ENCODE measurements at regions of chr2 and their contacts with region 1.

Region 1: DNA sequence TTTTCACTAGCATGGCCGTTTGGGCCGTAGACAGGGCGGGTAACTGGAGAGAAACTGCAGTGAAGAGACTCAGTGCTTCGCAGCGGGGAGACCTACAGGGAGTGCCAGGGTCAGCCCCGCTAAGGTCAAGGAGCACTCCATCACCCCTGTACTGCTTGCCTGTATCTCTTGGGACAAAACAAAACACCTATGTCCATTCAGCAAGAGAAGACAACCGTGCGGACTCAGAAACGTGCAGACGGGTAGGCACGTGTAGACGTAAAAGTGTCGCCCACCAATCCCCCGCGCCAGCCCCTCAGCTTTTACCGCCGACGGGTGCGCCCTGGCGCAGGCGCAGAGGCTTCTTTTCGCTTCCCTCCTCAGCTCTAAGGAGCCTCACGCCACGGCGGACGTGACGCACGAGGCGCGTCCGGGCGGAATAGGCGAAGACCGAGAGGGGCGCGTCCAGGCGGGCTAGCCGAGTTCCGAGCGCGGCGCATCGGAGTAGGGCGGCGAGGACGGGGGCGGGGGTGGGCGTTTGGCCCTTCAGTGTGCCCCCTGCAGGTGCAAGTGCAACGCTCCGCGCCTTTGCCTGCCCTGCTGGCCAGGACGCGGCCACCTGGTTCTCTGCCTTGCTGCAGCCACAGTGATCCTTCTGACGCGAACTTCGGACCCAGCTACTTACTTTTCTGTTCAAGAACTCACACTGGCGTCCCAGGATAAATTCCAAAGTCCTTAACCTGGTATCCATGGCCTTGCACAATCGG is 3.3 kb upstream of the SOS1 start:
- DNase-seq: peak; percentile 99
- H3K4me3 ChIP-seq: peak overlapping the region; percentile 73
- H3K27ac ChIP-seq: peak overlapping the region; percentile 87
- H3K4me1 ChIP-seq: peaks cover 61% of the 10 kb centered on the region
- CTCF ChIP-seq: peak; percentile 78

Region 2: DNA sequence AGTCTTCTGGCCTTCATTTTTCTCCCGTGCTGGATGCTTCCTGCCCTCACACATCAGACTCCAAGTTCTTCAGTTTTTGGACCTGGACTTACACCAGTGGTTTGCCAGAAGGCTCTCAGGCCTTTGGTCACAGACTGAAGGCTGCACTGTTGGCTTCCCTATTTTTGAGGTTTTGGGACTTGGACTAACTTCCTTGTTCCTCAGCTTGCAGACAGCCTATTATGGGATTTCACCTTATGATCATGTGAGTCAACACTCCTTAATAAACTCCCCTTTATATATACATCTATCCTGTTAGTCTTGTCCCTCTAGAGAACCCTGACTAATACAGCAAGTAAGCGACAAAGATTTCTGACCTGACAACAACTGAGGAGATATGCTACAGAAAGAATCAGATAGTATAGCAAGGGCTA is 1459.9 kb before region 1 on chr2:
- CTCF ChIA-PET with region 1: no interaction called
- POLR2A ChIA-PET with region 1: no interaction called
- intact Hi-C with region 1: loop called (anchors 10 kb)
- DNase-seq: no peak
- H3K4me3 ChIP-seq: no peak overlapping the region
- H3K27ac ChIP-seq: no peak overlapping the region
- H3K4me1 ChIP-seq: peaks cover 32% of the 10 kb centered on the region
- CTCF ChIP-seq: no peak

Region 3: DNA sequence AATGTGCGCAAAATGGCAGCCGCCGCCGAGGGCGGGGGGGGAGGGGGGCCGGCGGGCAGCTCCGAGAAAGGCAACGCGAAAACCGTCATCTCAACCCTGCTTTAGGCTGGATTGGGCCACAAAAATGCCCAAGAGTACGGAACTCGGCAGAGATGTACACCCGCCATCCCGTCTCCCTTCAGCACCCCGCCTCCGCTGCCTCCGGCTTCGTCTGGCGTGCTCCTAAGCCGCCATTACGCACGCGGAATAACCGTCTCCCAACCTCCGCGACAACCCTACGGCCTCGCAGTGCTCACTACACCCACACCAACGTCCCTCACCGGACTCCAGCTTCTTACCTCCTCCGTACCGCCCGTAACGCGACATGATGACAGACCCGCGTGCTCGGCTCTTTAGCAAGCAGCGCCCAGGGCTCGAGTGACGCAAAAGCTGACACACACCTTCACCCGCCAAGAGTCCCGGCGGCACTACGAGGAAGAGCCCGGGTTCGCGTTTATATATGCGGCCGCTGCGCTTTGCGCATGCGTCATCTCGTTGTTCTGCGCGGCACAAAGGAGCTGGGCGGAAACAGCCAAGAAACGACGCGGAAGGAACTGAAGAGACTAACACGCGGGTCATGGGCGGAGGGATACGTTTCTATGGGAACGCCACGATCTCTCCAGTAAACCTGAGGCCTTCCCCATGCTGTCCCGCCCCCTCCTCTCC is 373.1 kb before region 1 on chr2 and contains the start of gene SRSF7:
- CTCF ChIA-PET with region 1: no interaction called
- POLR2A ChIA-PET with region 1: interaction called, 4 read pairs
- intact Hi-C with region 1: loop called (anchors 5 kb)
- DNase-seq: peak; percentile 98
- H3K4me3 ChIP-seq: peak within 1 kb of the TSS; percentile 88
- H3K27ac ChIP-seq: peak within 1 kb of the TSS; percentile 80
- H3K4me1 ChIP-seq: peaks cover 55% of the 10 kb centered on the region
- CTCF ChIP-seq: no peak
- total RNA-seq, gene SRSF7: 316 and 337 TPM in 2 replicates

Region 4: DNA sequence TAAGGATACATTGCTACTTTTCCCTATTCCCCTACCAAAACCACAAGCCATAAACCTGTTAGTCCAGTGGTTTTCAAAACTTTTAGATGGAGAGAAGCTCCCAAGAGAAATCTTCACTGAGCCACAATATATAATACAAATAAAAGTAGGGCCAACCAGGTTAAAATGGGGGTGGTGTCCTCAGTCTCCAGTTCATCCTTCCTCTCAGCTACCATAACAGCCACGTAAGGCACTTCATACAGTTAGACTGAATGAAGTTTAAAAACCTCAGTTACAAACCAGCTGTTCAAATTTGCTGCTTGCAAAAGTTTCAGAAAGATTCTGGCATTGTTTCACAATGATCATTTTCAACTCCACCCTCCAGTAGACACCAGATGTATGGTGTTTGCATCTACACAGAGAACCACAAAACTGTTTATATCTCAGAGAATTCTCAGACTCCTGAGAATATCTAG is 29.3 kb before region 1 on chr2:
- CTCF ChIA-PET with region 1: no interaction called
- POLR2A ChIA-PET with region 1: interaction called, 19 read pairs
- intact Hi-C with region 1: no loop called
- DNase-seq: no peak
- H3K4me3 ChIP-seq: no peak overlapping the region
- H3K27ac ChIP-seq: no peak overlapping the region
- H3K4me1 ChIP-seq: peaks cover 22% of the 10 kb centered on the region
- CTCF ChIP-seq: no peak

Region 5: DNA sequence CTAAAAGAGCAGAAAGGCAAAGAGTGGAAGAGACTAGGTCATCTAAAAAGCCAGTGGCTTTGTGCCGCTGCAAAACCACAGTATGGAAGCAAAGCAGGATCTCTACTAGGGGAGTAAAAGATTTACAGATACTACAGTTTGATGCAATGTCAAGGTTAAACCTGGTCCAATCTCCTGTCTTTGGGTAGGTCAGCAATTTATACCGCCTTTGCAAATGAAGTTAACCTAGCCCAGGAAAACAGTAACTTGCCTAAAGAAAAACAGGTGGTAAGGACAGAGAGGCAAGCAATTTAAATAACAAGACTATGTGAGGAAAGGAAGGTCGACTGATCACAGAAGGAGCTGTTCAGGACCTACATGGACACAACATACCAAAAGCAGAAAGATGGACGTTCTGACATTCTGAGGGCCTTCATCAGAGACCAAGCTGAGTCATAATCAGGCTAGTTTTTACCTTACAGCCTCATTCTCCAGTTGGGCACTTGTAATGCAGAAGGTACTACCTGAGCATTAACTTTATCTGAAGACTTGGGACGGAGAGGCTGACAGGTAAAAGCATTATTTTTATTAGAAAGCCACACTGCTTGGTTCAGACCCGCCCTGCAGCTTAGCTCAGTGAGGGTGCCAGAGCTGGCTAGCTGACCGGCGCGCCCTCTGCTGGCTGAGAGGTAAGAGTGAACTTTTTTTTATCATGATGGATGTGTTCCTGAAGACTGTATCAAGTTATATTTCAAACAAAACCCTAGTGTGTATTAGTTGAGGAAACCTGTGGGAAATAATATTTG is 103.6 kb after region 1 on chr2:
- CTCF ChIA-PET with region 1: no interaction called
- POLR2A ChIA-PET with region 1: interaction called, 5 read pairs
- intact Hi-C with region 1: loop called (anchors 1 kb)
- DNase-seq: peak; percentile 69
- H3K4me3 ChIP-seq: peak overlapping the region; percentile 33
- H3K27ac ChIP-seq: no peak overlapping the region
- H3K4me1 ChIP-seq: peaks cover 7% of the 10 kb centered on the region
- CTCF ChIP-seq: peak; percentile 84

Region 6: DNA sequence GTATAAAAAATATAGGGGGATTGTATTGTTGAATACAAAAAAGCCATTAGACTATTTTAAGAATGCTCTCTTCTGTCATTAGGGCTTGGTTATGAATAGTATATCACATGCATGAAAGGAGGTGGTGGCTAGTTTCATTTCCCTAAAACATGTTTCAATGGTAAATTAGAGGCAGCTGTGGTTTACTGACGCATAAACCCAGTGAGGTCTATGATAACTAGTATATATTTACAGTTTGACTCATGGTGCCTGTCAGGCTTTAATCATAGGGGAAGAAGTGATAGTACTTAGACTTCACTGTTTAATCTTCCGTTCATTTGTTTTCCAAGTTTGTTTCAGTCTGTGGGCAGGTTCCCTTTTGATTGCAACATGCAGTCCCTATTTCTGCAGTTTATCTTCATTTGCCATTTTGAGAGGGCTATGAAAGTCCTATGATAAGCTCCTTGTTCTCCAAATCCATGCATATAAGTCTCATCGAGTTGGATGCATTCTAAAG is 368.0 kb after region 1 on chr2:
- CTCF ChIA-PET with region 1: no interaction called
- POLR2A ChIA-PET with region 1: no interaction called
- intact Hi-C with region 1: loop called (anchors 5 kb)
- DNase-seq: peak; percentile 94
- H3K4me3 ChIP-seq: peak overlapping the region; percentile 54
- H3K27ac ChIP-seq: peak overlapping the region; percentile 92
- H3K4me1 ChIP-seq: peaks cover 63% of the 10 kb centered on the region
- CTCF ChIP-seq: no peak